ENCODE measurements at regions of chr2 and their contacts with region 1.

Region 1: DNA sequence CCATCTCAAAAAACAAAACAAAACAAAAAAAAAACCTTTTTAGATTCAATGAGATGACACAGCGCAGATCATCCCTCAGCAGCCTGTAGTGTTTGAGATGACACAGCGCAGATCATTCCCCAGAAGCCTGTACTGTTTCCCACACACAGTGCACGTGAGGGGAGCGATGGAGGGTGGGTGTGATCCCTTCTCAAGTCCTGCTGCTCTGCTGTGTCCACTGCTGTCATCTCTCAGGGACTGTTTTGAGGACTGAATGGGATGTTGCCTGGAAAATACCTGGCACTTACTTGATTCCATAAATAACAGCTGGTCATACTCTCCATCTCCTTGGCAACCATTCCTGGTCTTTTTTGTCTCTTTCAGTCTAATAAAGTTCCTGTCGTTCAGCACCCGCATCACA is 25.7 kb downstream of the TGOLN2 start:
- DNase-seq: no peak
- H3K4me3 ChIP-seq: no peak overlapping the region
- H3K27ac ChIP-seq: no peak overlapping the region
- H3K4me1 ChIP-seq: no peaks in the 10 kb centered on the region
- CTCF ChIP-seq: no peak

Region 2: GRCh38 chr2:84653300-84653699 is 648.8 kb before region 1 on chr2:
- CTCF ChIA-PET with region 1: no interaction called
- POLR2A ChIA-PET with region 1: no interaction called
- intact Hi-C with region 1: no loop called
- DNase-seq: no peak
- H3K4me3 ChIP-seq: no peak overlapping the region
- H3K27ac ChIP-seq: no peak overlapping the region
- H3K4me1 ChIP-seq: no peaks in the 10 kb centered on the region
- CTCF ChIP-seq: no peak

Region 3: GRCh38 chr2:85266146-85267041 is 35.7 kb before region 1 on chr2:
- CTCF ChIA-PET with region 1: no interaction called
- POLR2A ChIA-PET with region 1: interaction called, 4 read pairs
- intact Hi-C with region 1: loop called (anchors 1 kb)
- DNase-seq: peak; percentile 78
- H3K4me3 ChIP-seq: no peak overlapping the region
- H3K27ac ChIP-seq: no peak overlapping the region
- H3K4me1 ChIP-seq: no peaks in the 10 kb centered on the region
- CTCF ChIP-seq: peak; percentile 99

Region 4: DNA sequence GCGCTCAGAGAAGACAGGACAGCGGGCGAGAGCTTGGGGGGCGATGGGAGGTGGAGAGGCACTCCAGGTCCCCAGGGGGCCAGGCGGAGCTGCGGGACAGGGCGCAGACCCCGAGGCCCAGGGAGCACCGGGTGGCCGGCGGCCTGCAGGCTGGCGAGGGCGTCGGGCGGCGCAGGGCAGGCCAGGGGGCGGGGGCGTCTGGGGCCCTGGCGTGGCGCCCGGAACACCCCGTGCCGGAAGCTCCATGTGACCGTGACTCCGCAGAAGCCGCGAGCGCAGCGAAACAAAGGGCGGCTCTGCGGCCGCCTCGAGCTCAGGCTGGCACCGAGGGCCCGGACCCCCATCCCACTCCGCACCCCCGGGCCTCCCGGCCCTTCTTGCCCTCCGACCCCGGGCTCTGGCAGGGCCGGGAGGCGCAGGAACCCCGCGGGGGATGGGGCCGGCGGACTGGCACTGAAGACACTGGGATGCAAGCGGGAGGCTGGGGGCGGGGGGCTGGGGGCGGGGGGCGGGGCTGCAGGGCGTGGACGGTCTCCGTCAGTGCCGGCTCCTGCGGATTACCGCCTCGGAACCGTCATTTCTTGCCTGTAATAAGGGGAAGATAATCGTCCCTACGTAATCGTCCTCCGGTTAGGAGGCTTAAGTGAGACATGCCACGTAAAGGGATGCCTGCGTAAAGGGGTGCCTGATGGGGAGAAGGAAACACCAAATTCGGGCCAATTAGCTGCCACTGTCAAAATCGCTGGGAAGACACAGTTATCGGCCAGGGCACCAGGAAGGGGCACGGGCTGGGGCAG is 135.6 kb after region 1 on chr2:
- CTCF ChIA-PET with region 1: no interaction called
- POLR2A ChIA-PET with region 1: no interaction called
- intact Hi-C with region 1: no loop called
- DNase-seq: peak; percentile 77
- H3K4me3 ChIP-seq: peak overlapping the region; percentile 32
- H3K27ac ChIP-seq: no peak overlapping the region
- H3K4me1 ChIP-seq: peaks cover 17% of the 10 kb centered on the region
- CTCF ChIP-seq: no peak